GM18951 (cell line): ENCODE measurements at regions of chr13 and their contacts with region 1.

Region 1: DNA sequence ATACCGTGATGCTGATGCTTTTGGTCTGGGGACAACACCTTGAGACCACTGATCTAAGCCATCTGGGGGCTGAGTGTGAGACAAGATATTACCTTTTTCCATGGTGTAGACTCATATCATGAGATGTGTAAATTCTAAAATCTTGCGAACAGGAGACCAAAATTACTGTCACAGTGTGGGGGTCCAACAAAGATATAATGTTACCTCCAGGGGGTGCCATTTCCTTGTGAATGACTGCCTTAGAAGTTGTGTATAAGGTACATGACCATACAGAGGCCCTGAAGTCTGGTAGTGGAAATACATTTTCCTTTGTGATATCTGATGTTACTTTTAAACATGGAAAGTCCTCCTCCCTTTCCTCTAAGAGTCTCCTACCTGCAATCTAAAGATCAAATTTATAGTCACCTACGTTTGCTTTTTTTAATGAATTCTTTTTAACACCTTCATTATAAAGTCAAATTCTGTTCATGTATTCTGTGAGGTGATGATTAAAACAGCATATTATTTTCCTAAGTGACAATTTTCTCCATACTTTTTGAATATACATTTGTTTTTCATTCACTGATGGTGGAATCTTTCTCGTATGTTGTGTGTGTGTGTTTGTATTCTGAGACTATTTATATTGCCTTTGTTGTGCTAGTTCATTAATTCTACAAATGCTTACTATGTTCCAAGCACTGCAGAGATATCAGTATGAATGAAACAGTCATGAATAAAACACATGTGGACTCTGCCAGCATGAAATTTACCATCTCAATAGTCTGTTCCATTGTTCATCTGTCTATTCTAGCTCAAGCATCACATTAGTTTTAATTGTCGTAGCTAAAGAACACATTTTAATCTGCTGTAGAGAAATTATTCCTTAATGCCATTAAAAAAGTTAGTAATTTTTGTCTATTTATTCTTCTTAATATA is 113.7 kb downstream of the RFC3 start:
- POLR2A ChIP-seq: no peak

Region 2: DNA sequence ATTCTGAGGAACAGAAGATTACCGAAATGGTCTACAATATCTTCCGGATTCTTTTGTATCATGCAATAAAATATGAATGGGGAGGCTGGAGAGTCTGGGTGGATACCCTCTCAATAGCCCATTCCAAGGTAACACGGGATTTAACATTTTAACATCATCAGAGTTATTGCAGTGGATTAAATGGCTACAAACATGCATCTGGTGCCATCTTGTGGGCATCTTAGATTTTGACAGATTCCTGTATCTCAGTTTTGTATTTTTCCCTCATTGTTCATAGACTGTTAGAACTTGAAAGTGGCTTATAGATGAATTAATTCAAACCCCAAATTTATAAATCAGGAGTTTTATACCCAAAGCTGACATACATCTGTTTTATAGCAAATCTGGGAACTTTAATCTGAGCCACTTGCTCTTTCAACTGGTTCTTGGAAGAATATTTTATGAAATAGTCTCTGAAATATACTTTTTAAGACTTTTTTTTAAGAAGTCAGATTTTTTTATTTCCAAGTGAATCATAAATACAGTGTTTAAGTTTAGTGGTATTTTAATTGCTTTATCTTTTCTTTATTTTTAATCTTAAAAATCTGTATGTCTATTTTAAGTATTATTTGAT is 1225.6 kb after region 1 on chr13:
- in situ Hi-C with region 1: loop called (anchors 10 kb)
- POLR2A ChIP-seq: no peak